ENCODE measurements at regions of chr3 and their contacts with region 1.

Region 1: GRCh38 chr3:151067158-151067557 is 18.3 kb upstream of the MED12L start:
- DNase-seq: peak in 1 of 35 experiments; percentile 5
- ATAC-seq: peak in 1 of 4 experiments; percentile 15
- H3K4me3 ChIP-seq: no peak overlapping the region
- H3K4me3 Mint-ChIP-seq: no peak overlapping the region
- H3K27ac ChIP-seq: no peak overlapping the region
- H3K27ac Mint-ChIP-seq: no peak overlapping the region
- H3K4me1 ChIP-seq: no peaks in the 10 kb centered on the region
- H3K4me1 Mint-ChIP-seq: no peaks in the 10 kb centered on the region
- H3K27me3 ChIP-seq: peaks cover 0 to 3% of the 10 kb centered on the region in 2 experiments
- H3K27me3 Mint-ChIP-seq: peaks cover 6 to 16% of the 10 kb centered on the region in 2 donors

Region 2: GRCh38 chr3:151544164-151544548 is 477.0 kb after region 1 on chr3:
- CTCF ChIA-PET with region 1: no interaction called
- POLR2A ChIA-PET with region 1: interaction called in 1 of 2 experiments, 12 read pairs
- DNase-seq: no peak
- ATAC-seq: no peak
- H3K4me3 ChIP-seq: no peak overlapping the region
- H3K4me3 Mint-ChIP-seq: no peak overlapping the region
- H3K27ac ChIP-seq: no peak overlapping the region
- H3K27ac Mint-ChIP-seq: no peak overlapping the region
- H3K4me1 ChIP-seq: no peaks in the 10 kb centered on the region
- H3K4me1 Mint-ChIP-seq: no peaks in the 10 kb centered on the region
- H3K27me3 ChIP-seq: no peaks in the 10 kb centered on the region
- H3K27me3 Mint-ChIP-seq: no peaks in the 10 kb centered on the region